Naive thymus-derived CD4-positive, alpha-beta T cell (primary cell): ENCODE measurements at regions of chr1 and their contacts with region 1.

Region 1: DNA sequence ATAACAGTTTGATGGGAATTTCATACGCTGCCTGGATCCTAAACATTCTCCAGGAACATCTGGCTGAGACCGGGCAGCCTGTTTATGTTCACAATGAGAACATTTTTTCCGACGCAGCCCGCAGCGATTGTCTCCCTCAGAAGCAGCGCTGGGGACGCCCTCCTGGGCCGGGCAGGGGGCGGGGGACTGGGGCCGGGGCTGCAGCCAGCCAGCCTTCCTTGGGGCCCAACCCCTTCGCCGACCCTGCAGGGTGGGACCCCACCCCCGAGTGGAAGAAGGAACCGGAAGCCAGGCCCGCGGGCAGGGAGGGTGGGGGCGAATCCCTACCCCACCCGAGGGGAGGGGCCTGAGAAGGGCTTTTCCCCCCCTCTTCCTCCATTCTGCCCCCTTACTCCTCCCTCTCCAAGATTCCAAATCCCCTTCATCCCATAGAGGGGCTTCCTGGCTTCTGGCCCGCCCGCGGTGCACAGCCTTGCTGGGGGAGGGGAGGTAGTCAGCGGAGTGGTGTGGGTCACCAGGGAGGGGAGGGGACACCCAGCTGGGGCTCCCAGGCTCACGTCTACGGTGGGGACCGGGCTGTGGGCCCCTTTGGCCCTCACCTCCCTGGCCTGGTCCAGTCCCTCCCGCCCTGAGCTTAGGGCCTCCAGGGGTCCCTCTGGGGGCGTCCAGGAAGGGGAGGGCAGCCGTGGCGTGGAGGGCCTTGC is 60.6 kb downstream of the WNT9A start:
- DNase-seq: peak in 8 of 9 donors; percentile 20 to 42 (median 35)
- ATAC-seq: peak; percentile 36
- H3K4me3 ChIP-seq: peak overlapping the region; percentile 43
- H3K4me3 Mint-ChIP-seq: peak overlapping the region; percentile 17 to 84 (median 74)
- H3K27ac ChIP-seq: peak overlapping the region; percentile 75
- H3K27ac Mint-ChIP-seq: peak overlapping the region in 8 of 9 donors; percentile 76 to 94 (median 92)
- H3K4me1 ChIP-seq: peaks cover 30 to 47% of the 10 kb centered on the region in 2 donors
- H3K4me1 Mint-ChIP-seq: peaks cover 9 to 60% (median 27%) of the 10 kb centered on the region in 7 donors
- H3K27me3 ChIP-seq: no peaks in the 10 kb centered on the region
- H3K27me3 Mint-ChIP-seq: peaks cover 0 to 4% (median 0%) of the 10 kb centered on the region in 5 donors

Region 2: DNA sequence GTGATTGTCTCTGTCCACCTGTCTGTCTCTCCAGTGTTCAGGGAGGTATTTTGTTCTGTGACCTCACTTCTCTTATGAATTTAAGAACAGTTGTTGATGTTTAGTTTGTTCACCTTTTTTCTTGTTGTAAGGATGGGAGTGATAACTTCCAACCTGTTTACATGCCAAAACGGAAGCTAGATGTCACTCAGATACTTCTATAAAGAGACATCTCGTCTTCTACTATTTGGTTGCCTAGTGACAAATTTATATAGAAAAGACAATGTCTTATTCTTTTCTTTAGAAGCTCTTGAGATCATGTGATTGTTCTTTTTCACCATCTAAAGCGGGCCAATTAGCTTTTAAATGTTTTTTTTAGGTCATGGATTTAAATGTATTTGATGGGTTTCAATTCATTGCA is 37.9 kb before region 1 on chr1:
- CTCF ChIA-PET with region 1: interaction called, 3 read pairs
- POLR2A ChIA-PET with region 1: interaction called, 3 read pairs
- intact Hi-C with region 1: loop called in 1 of 2 experiments (anchors 1 kb)
- DNase-seq: peak in 4 of 9 donors; percentile 6 to 32 (median 19)
- ATAC-seq: peak; percentile 27
- H3K4me3 ChIP-seq: no peak overlapping the region
- H3K4me3 Mint-ChIP-seq: no peak overlapping the region
- H3K27ac ChIP-seq: no peak overlapping the region
- H3K27ac Mint-ChIP-seq: peak overlapping the region in 2 of 9 donors; percentile 38 to 66
- H3K4me1 ChIP-seq: no peaks in the 10 kb centered on the region
- H3K4me1 Mint-ChIP-seq: peaks cover 0 to 13% (median 7%) of the 10 kb centered on the region in 7 donors
- H3K27me3 ChIP-seq: no peaks in the 10 kb centered on the region
- H3K27me3 Mint-ChIP-seq: peaks cover 0 to 7% (median 0%) of the 10 kb centered on the region in 5 donors

Region 3: DNA sequence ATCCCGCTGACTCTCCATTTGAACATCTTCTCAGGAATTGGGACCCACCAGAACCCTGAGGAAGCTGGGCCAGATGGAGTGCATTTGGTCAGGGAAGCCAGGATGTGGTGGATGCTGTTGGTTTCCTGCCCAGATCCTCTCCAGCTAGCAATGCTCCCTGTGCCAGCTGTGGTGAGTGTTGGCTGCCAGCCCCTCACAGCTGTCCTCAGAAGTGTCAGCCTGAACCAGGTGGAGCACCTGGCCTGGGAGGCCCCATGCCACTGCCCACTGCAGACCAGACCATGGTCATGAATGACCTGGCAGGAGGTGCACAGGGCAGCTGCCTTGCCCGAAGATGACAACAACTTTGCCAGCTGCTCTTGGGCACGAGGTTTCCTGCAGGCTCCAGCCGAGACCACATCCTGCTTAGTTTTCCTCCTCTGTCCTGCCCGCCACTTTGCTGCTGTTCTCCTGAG is 17.3 kb before region 1 on chr1:
- CTCF ChIA-PET with region 1: no interaction called
- POLR2A ChIA-PET with region 1: interaction called, 14 read pairs
- intact Hi-C with region 1: loop called in 1 of 2 experiments (anchors 2 kb)
- DNase-seq: peak in 5 of 9 donors; percentile 28 to 40 (median 37)
- ATAC-seq: peak; percentile 52
- H3K4me3 ChIP-seq: peak overlapping the region; percentile 48
- H3K4me3 Mint-ChIP-seq: peak overlapping the region; percentile 52 to 91 (median 78)
- H3K27ac ChIP-seq: no peak overlapping the region
- H3K27ac Mint-ChIP-seq: peak overlapping the region in 8 of 9 donors; percentile 8 to 92 (median 80)
- H3K4me1 ChIP-seq: peaks cover 31 to 34% of the 10 kb centered on the region in 2 donors
- H3K4me1 Mint-ChIP-seq: peaks cover 22 to 58% (median 50%) of the 10 kb centered on the region in 7 donors
- H3K27me3 ChIP-seq: no peaks in the 10 kb centered on the region
- H3K27me3 Mint-ChIP-seq: peaks cover 0 to 19% (median 0%) of the 10 kb centered on the region in 5 donors

Region 4: DNA sequence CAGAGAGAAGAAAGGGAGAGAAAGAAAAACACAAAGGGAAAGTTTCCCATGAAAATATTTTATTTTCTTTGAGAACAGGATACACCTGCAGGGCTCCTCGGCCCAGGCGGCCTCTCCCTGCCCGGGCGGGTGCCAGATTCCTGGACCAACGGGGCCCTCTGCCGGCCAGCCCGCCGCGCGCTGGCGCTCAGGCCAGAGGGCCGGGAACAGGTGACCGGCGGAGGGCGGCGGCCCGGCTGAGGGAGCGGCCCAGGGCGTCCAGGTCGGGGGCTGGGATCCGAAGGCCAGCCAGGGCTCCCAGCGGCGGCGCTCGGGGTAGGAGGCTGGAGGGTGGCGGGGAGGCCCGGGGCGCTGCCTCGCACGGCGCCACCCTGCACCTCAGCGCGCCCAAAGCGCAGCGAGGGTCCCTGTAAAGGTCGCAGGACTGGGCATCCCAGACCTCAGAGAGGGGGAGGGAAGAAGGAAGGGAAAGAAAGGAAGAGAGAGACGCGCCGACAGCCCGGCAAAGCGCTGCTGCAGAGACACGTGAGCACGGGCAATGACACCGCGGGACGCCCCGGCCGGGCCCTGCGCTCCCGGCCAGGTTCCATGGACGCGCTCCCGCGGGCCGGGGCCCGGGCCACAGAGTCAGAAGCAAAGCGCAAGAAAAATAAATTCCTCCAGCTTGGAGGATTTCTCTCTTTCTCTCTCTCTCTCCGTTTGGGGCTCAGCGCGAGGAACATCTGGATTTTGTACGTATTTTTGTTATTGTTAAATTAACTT is 59.7 kb after region 1 on chr1:
- CTCF ChIA-PET with region 1: no interaction called
- POLR2A ChIA-PET with region 1: no interaction called
- intact Hi-C with region 1: loop called in 1 of 2 experiments (anchors 5 kb)
- DNase-seq: peak in 8 of 9 donors; percentile 24 to 70 (median 60)
- ATAC-seq: peak; percentile 63
- H3K4me3 ChIP-seq: peak overlapping the region; percentile 17
- H3K4me3 Mint-ChIP-seq: peak overlapping the region; percentile 65 to 87 (median 74)
- H3K27ac ChIP-seq: no peak overlapping the region
- H3K27ac Mint-ChIP-seq: peak overlapping the region in 1 of 9 donors; percentile 23
- H3K4me1 ChIP-seq: peaks cover 0 to 7% of the 10 kb centered on the region in 2 donors
- H3K4me1 Mint-ChIP-seq: peaks cover 5 to 12% (median 8%) of the 10 kb centered on the region in 7 donors
- H3K27me3 ChIP-seq: no peaks in the 10 kb centered on the region
- H3K27me3 Mint-ChIP-seq: peaks cover 8 to 34% (median 13%) of the 10 kb centered on the region in 5 donors

Region 5: DNA sequence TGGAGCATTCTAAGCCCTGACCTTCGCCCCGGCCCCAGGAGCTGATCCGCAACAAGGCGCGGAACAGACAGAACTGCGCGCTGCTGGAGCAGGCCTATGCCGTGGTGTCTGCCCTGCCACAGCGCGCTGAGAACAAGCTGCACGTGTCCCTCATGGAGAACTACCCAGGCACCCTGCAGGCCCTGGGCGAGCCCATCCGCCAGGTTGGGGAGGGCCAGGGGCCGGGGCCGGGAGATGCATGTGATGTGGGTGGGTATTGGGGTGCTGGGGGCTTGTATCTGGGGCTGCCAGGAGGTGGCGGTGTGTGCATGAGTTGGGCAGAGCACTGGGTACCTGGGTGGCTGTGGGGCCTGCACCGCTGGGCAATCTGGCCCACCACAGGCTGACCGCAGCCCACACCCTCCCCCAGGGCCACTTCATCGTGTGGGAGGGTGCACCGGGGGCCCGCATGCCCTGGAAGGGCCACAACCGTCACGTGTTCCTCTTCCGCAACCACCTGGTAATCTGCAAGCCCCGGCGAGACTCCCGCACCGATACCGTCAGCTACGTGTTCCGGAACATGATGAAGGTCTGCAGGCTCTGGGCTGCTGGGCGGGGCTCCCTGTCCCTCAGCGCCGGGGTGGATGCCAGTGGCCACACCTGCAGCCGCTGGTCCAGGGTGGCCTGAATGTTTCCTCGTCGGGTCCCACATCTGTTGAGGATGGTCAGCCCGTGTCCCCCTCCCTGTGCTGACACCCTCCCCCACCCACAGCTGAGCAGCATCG is 453.7 kb after region 1 on chr1:
- CTCF ChIA-PET with region 1: no interaction called
- POLR2A ChIA-PET with region 1: no interaction called
- intact Hi-C with region 1: no loop called
- DNase-seq: no peak
- ATAC-seq: no peak
- H3K4me3 ChIP-seq: no peak overlapping the region
- H3K4me3 Mint-ChIP-seq: no peak overlapping the region
- H3K27ac ChIP-seq: no peak overlapping the region
- H3K27ac Mint-ChIP-seq: no peak overlapping the region
- H3K4me1 ChIP-seq: no peaks in the 10 kb centered on the region
- H3K4me1 Mint-ChIP-seq: no peaks in the 10 kb centered on the region
- H3K27me3 ChIP-seq: no peaks in the 10 kb centered on the region
- H3K27me3 Mint-ChIP-seq: no peaks in the 10 kb centered on the region